Naive thymus-derived CD4-positive, alpha-beta T cell (primary cell): ENCODE measurements at regions of chr3 and their contacts with region 1.

Region 1: GRCh38 chr3:129439817-129440617 is at the starts of genes IFT122 and MBD4:
- DNase-seq: peak; percentile 95 to 100 (median 99)
- ATAC-seq: peak; percentile 91
- H3K4me3 ChIP-seq: peak within 1 kb of the TSS; percentile 99
- H3K4me3 Mint-ChIP-seq: peak within 1 kb of the TSS; percentile 85 to 98 (median 94)
- H3K27ac ChIP-seq: peak within 1 kb of the TSS; percentile 95
- H3K27ac Mint-ChIP-seq: peak within 1 kb of the TSS; percentile 93 to 99 (median 97)
- H3K4me1 ChIP-seq: peaks cover 19 to 38% of the 10 kb centered on the region in 2 donors
- H3K4me1 Mint-ChIP-seq: peaks cover 52 to 88% (median 73%) of the 10 kb centered on the region in 7 donors
- H3K27me3 ChIP-seq: no peaks in the 10 kb centered on the region
- H3K27me3 Mint-ChIP-seq: no peaks in the 10 kb centered on the region
- total RNA-seq, gene IFT122: 16.6 to 25.2 (median 18.8) TPM
- total RNA-seq, gene MBD4: 37.9 to 56.6 (median 53.1) TPM

Region 2: DNA sequence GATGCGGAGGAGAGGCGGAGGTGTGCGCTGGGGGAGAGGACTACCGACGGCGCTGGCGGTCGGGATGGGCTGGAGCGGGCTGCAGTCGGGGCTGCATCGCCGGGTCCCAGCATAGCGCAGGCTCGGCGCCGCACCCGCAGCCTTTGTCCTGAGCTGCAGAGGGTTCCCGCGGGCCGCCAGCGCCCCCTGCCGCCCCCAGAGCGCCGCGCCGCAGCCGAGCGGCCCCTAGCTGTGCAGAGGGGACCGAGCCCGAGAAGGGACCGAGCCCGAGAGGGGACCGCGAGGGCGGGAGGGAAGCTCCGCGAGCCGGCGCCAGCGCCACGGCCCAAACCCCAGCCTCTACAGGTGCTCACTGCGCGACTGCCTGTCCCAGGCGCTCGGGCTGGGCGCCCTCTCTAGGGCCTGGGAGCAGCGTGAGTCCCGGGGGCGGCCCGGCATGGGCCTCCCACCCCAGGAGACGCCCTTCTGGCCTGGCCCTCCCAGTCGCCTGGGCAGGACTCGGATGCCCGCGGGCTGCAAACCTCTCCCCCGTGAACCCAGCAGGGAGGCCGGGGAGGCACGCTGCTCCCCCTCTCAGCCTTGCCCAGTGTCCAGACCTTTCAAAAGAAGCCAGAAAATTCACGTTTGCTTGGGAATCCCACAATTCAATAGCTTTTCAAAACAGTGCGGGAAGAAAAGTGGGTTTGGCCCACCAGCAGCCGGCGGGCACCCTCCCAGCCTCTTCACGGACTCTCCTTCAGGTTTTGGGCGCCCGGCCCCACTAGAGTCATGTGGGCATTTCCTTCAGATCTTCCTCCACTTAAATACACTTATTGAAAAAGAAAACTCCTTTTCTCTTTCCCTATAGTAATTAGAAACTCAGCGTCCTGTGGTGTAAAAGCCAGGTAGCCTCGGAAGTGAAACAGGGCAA is 1984.2 kb before region 1 on chr3:
- CTCF ChIA-PET with region 1: no interaction called
- POLR2A ChIA-PET with region 1: no interaction called
- intact Hi-C with region 1: no loop called
- DNase-seq: peak in 8 of 9 donors; percentile 14 to 70 (median 41)
- ATAC-seq: peak; percentile 75
- H3K4me3 ChIP-seq: no peak overlapping the region
- H3K4me3 Mint-ChIP-seq: peak overlapping the region in 9 of 10 donors; percentile 5 to 77 (median 53)
- H3K27ac ChIP-seq: no peak overlapping the region
- H3K27ac Mint-ChIP-seq: no peak overlapping the region
- H3K4me1 ChIP-seq: no peaks in the 10 kb centered on the region
- H3K4me1 Mint-ChIP-seq: peaks cover 4 to 18% (median 14%) of the 10 kb centered on the region in 7 donors
- H3K27me3 ChIP-seq: peaks cover 0 to 8% of the 10 kb centered on the region in 2 donors
- H3K27me3 Mint-ChIP-seq: peaks cover 47 to 72% (median 65%) of the 10 kb centered on the region in 5 donors

Region 3: DNA sequence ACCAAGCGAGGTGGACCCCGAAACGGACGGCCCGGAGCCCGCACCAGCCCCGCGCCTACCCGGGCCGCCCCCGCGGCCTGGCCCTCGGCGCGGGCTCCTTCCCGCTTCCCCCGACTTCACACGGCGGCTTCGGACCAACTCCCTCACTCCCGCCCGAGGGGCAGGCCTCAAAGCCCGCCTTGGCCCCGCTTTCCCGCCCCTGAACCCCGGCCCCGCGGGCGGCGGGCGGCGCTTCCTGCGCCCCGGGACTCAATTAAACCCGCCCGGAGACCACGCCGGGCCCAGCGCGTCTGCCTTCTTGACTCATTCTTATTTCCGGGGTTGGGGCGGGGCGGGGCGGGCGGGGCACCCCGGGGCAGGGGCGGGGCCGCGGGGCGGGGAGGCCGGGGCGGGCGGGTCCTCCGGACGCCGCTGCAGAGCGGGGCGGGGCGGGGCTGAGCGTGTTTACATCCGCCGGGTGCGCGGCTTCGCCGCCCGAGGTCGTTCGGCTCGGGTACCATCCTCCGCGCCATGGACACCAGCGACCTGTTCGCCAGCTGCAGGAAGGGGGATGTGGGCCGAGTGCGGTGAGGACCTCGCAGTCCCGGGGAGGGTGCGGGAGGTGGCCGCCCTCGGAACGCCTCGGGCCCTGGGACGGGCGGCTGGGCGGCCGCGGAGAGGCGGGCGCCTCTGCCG is 1767.4 kb before region 1 on chr3 and contains the start of gene ABTB1:
- CTCF ChIA-PET with region 1: no interaction called
- POLR2A ChIA-PET with region 1: no interaction called
- intact Hi-C with region 1: loop called in 1 of 2 experiments (anchors 1 kb)
- DNase-seq: peak; percentile 73 to 88 (median 83)
- ATAC-seq: peak; percentile 93
- H3K4me3 ChIP-seq: peak within 1 kb of the TSS; percentile 86
- H3K4me3 Mint-ChIP-seq: peak within 1 kb of the TSS; percentile 88 to 96 (median 94)
- H3K27ac ChIP-seq: peak within 1 kb of the TSS; percentile 98
- H3K27ac Mint-ChIP-seq: peak within 1 kb of the TSS; percentile 92 to 98 (median 97)
- H3K4me1 ChIP-seq: peaks cover 13 to 17% of the 10 kb centered on the region in 2 donors
- H3K4me1 Mint-ChIP-seq: peaks cover 17 to 37% (median 33%) of the 10 kb centered on the region in 7 donors
- H3K27me3 ChIP-seq: no peaks in the 10 kb centered on the region
- H3K27me3 Mint-ChIP-seq: no peaks in the 10 kb centered on the region
- total RNA-seq, gene ABTB1: 26.7 to 182 (median 124) TPM

Region 4: GRCh38 chr3:127953091-127954035 is 1486.7 kb before region 1 on chr3:
- CTCF ChIA-PET with region 1: no interaction called
- POLR2A ChIA-PET with region 1: no interaction called
- intact Hi-C with region 1: no loop called
- DNase-seq: no peak
- ATAC-seq: no peak
- H3K4me3 ChIP-seq: no peak overlapping the region
- H3K4me3 Mint-ChIP-seq: no peak overlapping the region
- H3K27ac ChIP-seq: no peak overlapping the region
- H3K27ac Mint-ChIP-seq: no peak overlapping the region
- H3K4me1 ChIP-seq: no peaks in the 10 kb centered on the region
- H3K4me1 Mint-ChIP-seq: no peaks in the 10 kb centered on the region
- H3K27me3 ChIP-seq: no peaks in the 10 kb centered on the region
- H3K27me3 Mint-ChIP-seq: peaks cover 18 to 55% (median 33%) of the 10 kb centered on the region in 5 donors

Region 5: GRCh38 chr3:128680602-128681368 is 759.2 kb before region 1 on chr3:
- CTCF ChIA-PET with region 1: no interaction called
- POLR2A ChIA-PET with region 1: interaction called, 5 read pairs
- intact Hi-C with region 1: loop called in 1 of 2 experiments (anchors 1 kb)
- DNase-seq: peak; percentile 94 to 98 (median 95)
- ATAC-seq: peak; percentile 95
- H3K4me3 ChIP-seq: peak overlapping the region; percentile 91
- H3K4me3 Mint-ChIP-seq: peak overlapping the region; percentile 84 to 98 (median 94)
- H3K27ac ChIP-seq: peak overlapping the region; percentile 92
- H3K27ac Mint-ChIP-seq: peak overlapping the region; percentile 95 to 100 (median 99)
- H3K4me1 ChIP-seq: peaks cover 11 to 14% of the 10 kb centered on the region in 2 donors
- H3K4me1 Mint-ChIP-seq: peaks cover 17 to 50% (median 38%) of the 10 kb centered on the region in 7 donors
- H3K27me3 ChIP-seq: no peaks in the 10 kb centered on the region
- H3K27me3 Mint-ChIP-seq: no peaks in the 10 kb centered on the region

Region 6: GRCh38 chr3:129183569-129184395 is 256.2 kb before region 1 on chr3 and contains the start of gene CNBP:
- CTCF ChIA-PET with region 1: no interaction called
- POLR2A ChIA-PET with region 1: interaction called, 4 read pairs
- intact Hi-C with region 1: loop called (anchors 1 to 2 kb)
- DNase-seq: peak; percentile 90 to 96 (median 94)
- ATAC-seq: peak; percentile 100
- H3K4me3 ChIP-seq: peak within 1 kb of the TSS; percentile 74
- H3K4me3 Mint-ChIP-seq: peak within 1 kb of the TSS; percentile 93 to 99 (median 96)
- H3K27ac ChIP-seq: peak within 1 kb of the TSS; percentile 100
- H3K27ac Mint-ChIP-seq: peak within 1 kb of the TSS; percentile 91 to 99 (median 97)
- H3K4me1 ChIP-seq: peaks cover 18 to 27% of the 10 kb centered on the region in 2 donors
- H3K4me1 Mint-ChIP-seq: peaks cover 32 to 48% (median 42%) of the 10 kb centered on the region in 7 donors
- H3K27me3 ChIP-seq: no peaks in the 10 kb centered on the region
- H3K27me3 Mint-ChIP-seq: no peaks in the 10 kb centered on the region
- total RNA-seq, gene CNBP: 259 to 366 (median 327) TPM

Region 7: GRCh38 chr3:129428376-129429079 is 11.5 kb before region 1 on chr3 and contains the start of gene EFCAB12:
- CTCF ChIA-PET with region 1: no interaction called
- POLR2A ChIA-PET with region 1: interaction called, 66 read pairs
- intact Hi-C with region 1: loop called (anchors 1 kb)
- DNase-seq: peak; percentile 78 to 90 (median 86)
- ATAC-seq: peak; percentile 98
- H3K4me3 ChIP-seq: peak within 1 kb of the TSS; percentile 63
- H3K4me3 Mint-ChIP-seq: peak within 1 kb of the TSS; percentile 78 to 97 (median 89)
- H3K27ac ChIP-seq: peak within 1 kb of the TSS; percentile 65
- H3K27ac Mint-ChIP-seq: peak within 1 kb of the TSS; percentile 60 to 91 (median 75)
- H3K4me1 ChIP-seq: peaks cover 0 to 13% of the 10 kb centered on the region in 2 donors
- H3K4me1 Mint-ChIP-seq: peaks cover 17 to 29% (median 22%) of the 10 kb centered on the region in 7 donors
- H3K27me3 ChIP-seq: no peaks in the 10 kb centered on the region
- H3K27me3 Mint-ChIP-seq: peaks cover 0 to 13% (median 0%) of the 10 kb centered on the region in 5 donors
- total RNA-seq, gene EFCAB12: 1.5 to 2.7 (median 2.3) TPM

Region 8: DNA sequence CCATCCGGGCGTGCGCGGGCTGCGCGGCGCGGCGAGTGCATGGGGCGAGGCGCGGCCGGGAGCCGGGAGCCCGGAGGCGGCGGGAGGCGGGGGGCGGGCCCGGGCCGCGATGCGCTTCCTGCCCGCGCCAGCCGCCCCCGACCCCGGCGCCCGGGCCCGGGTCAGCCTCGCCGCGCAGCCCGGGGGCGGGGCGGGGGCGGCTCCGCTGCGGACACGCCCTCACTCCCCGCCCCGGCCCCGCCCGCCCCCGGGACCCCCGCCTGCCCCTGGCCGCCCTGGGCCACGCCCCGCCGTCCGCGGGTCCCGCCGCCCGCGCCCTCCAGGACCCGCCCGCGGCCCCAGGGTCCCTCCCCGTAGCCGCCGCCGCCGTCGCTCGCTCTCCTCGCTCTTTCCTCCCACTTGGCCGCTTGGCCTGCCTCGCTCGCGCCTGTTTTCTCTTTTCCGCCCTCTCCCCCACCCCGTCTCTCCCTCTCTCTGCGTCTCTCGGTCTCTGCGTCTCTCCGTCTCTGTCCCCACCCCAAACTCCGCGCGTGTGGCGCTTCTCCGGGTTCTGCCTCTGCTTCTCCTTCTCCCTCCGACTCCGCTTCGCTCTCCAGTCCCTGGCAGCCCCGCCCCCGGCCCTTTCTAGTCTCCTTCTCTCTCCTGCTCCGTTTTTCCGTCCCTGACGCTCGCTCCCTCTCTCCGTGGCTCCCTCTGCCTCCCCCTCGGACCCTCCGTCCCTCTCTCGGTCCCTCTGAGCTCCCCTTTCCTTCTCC is 166.8 kb after region 1 on chr3 and contains the start of gene PLXND1:
- CTCF ChIA-PET with region 1: no interaction called
- POLR2A ChIA-PET with region 1: interaction called, 3 read pairs
- intact Hi-C with region 1: loop called in 1 of 2 experiments (anchors 1 kb)
- DNase-seq: peak in 5 of 9 donors; percentile 14 to 49 (median 25)
- ATAC-seq: peak; percentile 76
- H3K4me3 ChIP-seq: peak within 1 kb of the TSS; percentile 53
- H3K4me3 Mint-ChIP-seq: peak within 1 kb of the TSS; percentile 89 to 98 (median 93)
- H3K27ac ChIP-seq: peak within 1 kb of the TSS; percentile 51
- H3K27ac Mint-ChIP-seq: peak within 1 kb of the TSS; percentile 35 to 92 (median 84)
- H3K4me1 ChIP-seq: peaks cover 0 to 6% of the 10 kb centered on the region in 2 donors
- H3K4me1 Mint-ChIP-seq: peaks cover 11 to 25% (median 14%) of the 10 kb centered on the region in 7 donors
- H3K27me3 ChIP-seq: peaks cover 0 to 6% of the 10 kb centered on the region in 2 donors
- H3K27me3 Mint-ChIP-seq: peaks cover 8 to 64% (median 11%) of the 10 kb centered on the region in 5 donors
- total RNA-seq, gene PLXND1: 1.9 to 82.5 (median 7.5) TPM

Region 9: DNA sequence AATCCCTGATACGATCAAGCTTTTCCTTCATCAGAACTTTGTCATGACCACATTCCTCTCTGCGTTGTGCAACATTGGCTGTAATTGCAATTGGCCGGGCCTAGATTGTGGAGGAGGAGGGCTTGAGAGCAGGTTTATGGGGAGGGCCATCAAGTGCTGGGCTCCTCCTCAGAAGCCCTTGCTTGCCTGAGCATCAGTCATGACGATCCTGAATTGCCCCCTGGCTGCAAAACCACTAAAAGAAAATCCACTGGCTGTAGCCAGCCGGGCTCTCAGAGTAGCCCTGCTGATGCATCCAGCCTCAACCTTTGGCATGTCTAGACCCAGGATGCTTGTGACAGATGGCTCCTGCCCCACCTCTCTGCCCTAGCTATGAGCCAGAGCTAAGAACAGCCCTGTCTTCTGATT is 521.1 kb after region 1 on chr3:
- CTCF ChIA-PET with region 1: no interaction called
- POLR2A ChIA-PET with region 1: no interaction called
- intact Hi-C with region 1: no loop called
- DNase-seq: no peak
- ATAC-seq: no peak
- H3K4me3 ChIP-seq: no peak overlapping the region
- H3K4me3 Mint-ChIP-seq: no peak overlapping the region
- H3K27ac ChIP-seq: no peak overlapping the region
- H3K27ac Mint-ChIP-seq: no peak overlapping the region
- H3K4me1 ChIP-seq: no peaks in the 10 kb centered on the region
- H3K4me1 Mint-ChIP-seq: peaks cover 0 to 6% (median 0%) of the 10 kb centered on the region in 7 donors
- H3K27me3 ChIP-seq: no peaks in the 10 kb centered on the region
- H3K27me3 Mint-ChIP-seq: peaks cover 0 to 6% (median 0%) of the 10 kb centered on the region in 5 donors

Region 10: DNA sequence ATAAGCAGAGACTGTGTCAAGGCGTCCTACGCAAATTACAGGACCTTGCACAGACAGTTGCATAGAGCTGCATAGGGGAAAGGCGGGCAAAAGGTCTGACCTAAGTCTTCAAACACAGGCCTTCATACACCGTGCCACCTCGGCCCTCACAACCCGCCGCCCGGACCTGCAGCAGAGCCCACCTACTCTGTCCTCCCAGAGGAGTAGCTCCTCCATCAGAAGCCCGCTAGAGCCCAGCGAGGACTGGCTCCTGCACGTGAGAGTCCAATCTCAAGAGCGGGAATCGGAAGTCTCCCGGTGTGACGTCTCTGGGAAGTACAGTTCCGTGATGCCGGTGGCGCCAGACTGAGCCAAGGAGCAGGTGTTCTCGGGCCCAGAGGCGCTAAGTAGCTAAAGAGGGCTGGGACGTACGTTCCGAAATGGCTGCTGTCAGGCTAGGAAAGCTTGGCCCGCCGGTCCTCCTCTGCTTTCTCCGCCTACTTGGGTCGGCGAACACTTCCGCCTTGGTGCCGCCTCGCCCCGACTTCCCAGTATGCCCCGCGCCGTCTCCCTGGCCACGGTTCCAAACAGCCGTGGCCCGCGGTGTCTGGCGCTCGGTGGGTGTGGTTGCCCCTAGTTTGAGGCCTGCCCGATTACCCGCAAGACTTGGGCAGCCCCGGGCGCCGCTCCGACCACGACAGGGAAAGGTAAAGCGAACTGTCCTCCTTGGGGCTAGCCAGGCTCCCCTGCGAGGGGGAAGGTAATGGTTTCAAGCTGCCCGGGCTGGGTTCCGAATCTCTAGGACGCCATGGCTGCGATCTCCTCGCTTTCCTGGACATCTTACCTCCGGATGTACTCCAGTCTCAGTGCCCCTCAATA is 1586.5 kb after region 1 on chr3 and contains the starts of genes ASTE1 and NEK11:
- CTCF ChIA-PET with region 1: no interaction called
- POLR2A ChIA-PET with region 1: no interaction called
- intact Hi-C with region 1: loop called in 1 of 2 experiments (anchors 2 kb)
- DNase-seq: peak; percentile 87 to 95 (median 92)
- ATAC-seq: peak; percentile 99
- H3K4me3 ChIP-seq: peak within 1 kb of the TSS; percentile 97
- H3K4me3 Mint-ChIP-seq: peak within 1 kb of the TSS; percentile 85 to 96 (median 89)
- H3K27ac ChIP-seq: peak within 1 kb of the TSS; percentile 95
- H3K27ac Mint-ChIP-seq: peak within 1 kb of the TSS; percentile 96 to 99 (median 97)
- H3K4me1 ChIP-seq: peaks cover 34 to 40% of the 10 kb centered on the region in 2 donors
- H3K4me1 Mint-ChIP-seq: peaks cover 29 to 59% (median 52%) of the 10 kb centered on the region in 7 donors
- H3K27me3 ChIP-seq: no peaks in the 10 kb centered on the region
- H3K27me3 Mint-ChIP-seq: peaks cover 0 to 6% (median 0%) of the 10 kb centered on the region in 5 donors
- total RNA-seq, gene ASTE1: 18.7 to 38.5 (median 27.0) TPM
- total RNA-seq, gene NEK11: 1.7 to 9.0 (median 5.3) TPM